Calu3 (cell line): ENCODE measurements at regions of chr9 and their contacts with region 1.

Region 1: DNA sequence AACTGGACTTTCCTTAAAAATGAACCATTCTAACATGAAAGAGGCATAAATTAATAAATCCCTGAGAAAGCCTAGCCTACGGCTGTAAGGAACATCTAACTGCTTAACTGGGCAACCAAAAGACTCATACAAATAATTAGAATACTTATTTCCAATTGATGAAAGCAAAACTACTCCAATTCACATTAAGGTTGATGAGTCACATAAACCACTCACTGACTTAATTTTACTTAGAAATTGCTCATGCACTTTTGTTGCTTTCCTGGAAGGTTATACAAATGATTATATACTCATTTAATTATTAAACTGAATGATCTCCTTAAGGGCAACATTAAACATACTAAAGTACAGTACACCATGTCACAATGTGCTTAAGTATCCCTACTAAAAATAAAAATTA is 101.9 kb downstream of the NFIB start:
- DNase-seq: no peak
- H3K4me3 Mint-ChIP-seq: peak overlapping the region; percentile 55
- H3K27ac Mint-ChIP-seq: peak overlapping the region; percentile 89
- H3K4me1 Mint-ChIP-seq: peaks cover 56% of the 10 kb centered on the region
- H3K27me3 Mint-ChIP-seq: no peaks in the 10 kb centered on the region
- CTCF ChIP-seq: no peak

Region 2: DNA sequence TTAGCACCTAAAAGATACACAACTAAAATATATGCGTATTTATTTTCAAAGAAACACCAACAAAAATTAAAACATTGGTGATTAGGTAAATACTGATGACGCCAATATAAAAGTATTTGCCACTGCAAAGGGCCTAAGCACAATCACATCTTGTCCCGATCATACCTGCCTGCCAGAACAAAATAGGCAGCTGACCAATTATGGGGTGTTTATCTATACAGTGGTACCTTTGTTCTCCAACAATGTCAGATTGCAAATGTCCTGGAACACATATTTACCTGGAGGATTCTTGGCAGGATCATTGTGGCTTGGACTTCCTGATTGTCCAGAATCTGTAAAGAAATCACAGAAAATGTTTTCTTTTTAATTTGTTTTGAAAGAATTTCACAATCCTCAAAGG is 32.6 kb before region 1 on chr9:
- CTCF ChIA-PET with region 1: interaction called, 6 read pairs
- intact Hi-C with region 1: loop called (anchors 1 kb)
- DNase-seq: peak; percentile 56
- H3K4me3 Mint-ChIP-seq: no peak overlapping the region
- H3K27ac Mint-ChIP-seq: peak overlapping the region; percentile 82
- H3K4me1 Mint-ChIP-seq: peaks cover 37% of the 10 kb centered on the region
- H3K27me3 Mint-ChIP-seq: no peaks in the 10 kb centered on the region
- CTCF ChIP-seq: no peak

Region 3: GRCh38 chr9:14186096-14186495 is 26.0 kb before region 1 on chr9:
- CTCF ChIA-PET with region 1: interaction called, 12 read pairs
- intact Hi-C with region 1: loop called (anchors 1 kb)
- DNase-seq: no peak
- H3K4me3 Mint-ChIP-seq: no peak overlapping the region
- H3K27ac Mint-ChIP-seq: peak overlapping the region; percentile 94
- H3K4me1 Mint-ChIP-seq: peaks cover 58% of the 10 kb centered on the region
- H3K27me3 Mint-ChIP-seq: no peaks in the 10 kb centered on the region
- CTCF ChIP-seq: no peak

Region 4: DNA sequence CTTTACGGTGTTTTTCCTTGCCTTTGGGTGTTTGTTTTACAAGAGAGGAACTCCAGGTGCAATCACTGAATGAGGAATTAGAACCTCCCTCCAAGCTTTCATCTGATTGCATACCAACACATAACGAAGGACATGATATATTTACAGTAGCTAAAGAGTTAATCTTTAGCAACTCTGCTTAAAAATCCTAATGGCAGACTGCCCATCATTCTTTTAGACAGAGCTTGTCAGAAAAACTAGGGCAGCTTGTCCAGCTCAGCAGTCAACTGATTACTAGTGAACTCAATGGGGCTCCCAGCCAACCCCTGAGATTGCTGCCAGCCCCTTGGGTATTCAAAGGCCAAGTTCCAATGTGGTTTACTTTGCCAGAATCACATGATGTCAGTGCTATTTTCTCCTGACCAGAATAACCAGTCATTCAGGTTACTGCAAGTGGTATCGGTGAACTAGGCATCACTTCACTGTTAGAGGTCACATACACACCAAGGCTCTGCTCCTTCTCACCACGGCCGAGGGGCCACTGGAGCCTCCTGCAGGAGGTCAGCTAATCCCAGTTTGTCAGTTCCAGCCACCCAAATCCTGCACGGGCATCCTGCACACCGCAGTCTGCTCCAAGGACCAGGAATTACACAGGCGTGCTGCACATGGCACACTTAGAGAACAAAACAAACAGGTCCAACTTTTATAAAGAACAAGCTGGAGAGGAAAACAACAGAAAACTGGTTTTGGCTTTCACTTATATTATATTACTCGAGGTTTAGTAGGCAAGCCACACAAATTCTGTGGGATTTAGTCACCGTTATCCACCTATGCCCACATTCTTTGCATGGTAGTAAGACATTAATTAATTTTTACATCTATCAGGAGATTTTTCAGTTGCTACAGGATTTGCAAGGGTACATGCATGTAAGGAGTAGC is 39.3 kb after region 1 on chr9:
- CTCF ChIA-PET with region 1: no interaction called
- intact Hi-C with region 1: loop called (anchors 2 kb)
- DNase-seq: peak; percentile 76
- H3K4me3 Mint-ChIP-seq: peak overlapping the region; percentile 45
- H3K27ac Mint-ChIP-seq: peak overlapping the region; percentile 69
- H3K4me1 Mint-ChIP-seq: peaks cover 21% of the 10 kb centered on the region
- H3K27me3 Mint-ChIP-seq: no peaks in the 10 kb centered on the region
- CTCF ChIP-seq: no peak

Region 5: DNA sequence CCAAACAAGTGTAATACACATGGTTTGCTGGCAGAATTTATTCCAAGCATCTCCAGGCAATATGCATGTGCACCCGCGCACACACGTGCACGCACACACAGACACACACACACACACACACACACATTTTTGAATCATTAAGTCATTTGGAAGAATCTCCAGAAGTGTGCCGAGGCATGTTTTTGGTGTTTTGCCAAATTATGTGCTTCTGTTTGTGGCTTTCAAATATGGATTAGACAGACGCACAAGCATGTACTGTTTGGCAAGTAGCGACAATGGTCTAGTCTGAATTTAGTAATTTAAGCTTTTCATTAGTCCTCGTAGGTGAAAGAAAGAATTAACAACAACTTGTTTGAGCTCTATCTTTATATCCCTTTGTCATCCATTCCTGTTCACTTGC is 65.2 kb after region 1 on chr9:
- CTCF ChIA-PET with region 1: interaction called, 4 read pairs
- intact Hi-C with region 1: loop called (anchors 2 kb)
- DNase-seq: peak; percentile 32
- H3K4me3 Mint-ChIP-seq: peak overlapping the region; percentile 51
- H3K27ac Mint-ChIP-seq: peak overlapping the region; percentile 63
- H3K4me1 Mint-ChIP-seq: peaks cover 59% of the 10 kb centered on the region
- H3K27me3 Mint-ChIP-seq: no peaks in the 10 kb centered on the region
- CTCF ChIP-seq: no peak

Region 6: DNA sequence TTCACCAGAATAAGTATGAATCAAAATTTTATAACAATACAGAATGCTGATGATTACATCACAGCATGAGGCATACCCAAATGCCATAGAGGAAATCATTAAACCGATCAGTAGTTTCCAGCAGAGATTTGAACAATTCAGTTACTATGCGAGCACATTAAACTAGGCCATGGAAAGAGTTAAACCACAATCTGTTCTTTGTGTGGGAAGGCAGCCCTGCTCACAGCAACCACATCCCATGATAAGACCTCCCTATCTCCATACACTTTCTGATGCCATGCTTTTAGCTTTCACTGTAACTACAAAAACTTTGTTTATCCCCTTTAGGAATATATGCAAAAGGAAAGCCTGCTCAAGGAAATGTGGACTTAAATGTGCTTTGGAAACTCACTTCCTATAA is 97.3 kb after region 1 on chr9:
- CTCF ChIA-PET with region 1: no interaction called
- intact Hi-C with region 1: loop called (anchors 5 kb)
- DNase-seq: peak; percentile 41
- H3K4me3 Mint-ChIP-seq: peak overlapping the region; percentile 54
- H3K27ac Mint-ChIP-seq: peak overlapping the region; percentile 54
- H3K4me1 Mint-ChIP-seq: peaks cover 29% of the 10 kb centered on the region
- H3K27me3 Mint-ChIP-seq: no peaks in the 10 kb centered on the region
- CTCF ChIP-seq: no peak